ENCODE measurements at regions of chr3 and their contacts with region 1.

Region 1: GRCh38 chr3:11258958-11259357 is 13.2 kb upstream of the ATG7 start:
- H3K4me3 Mint-ChIP-seq: no peak overlapping the region
- H3K27ac Mint-ChIP-seq: no peak overlapping the region
- H3K4me1 Mint-ChIP-seq: peaks cover 22% of the 10 kb centered on the region
- H3K27me3 Mint-ChIP-seq: no peaks in the 10 kb centered on the region

Region 2: GRCh38 chr3:11172105-11172690 is 86.8 kb before region 1 on chr3:
- intact Hi-C with region 1: no loop called
- H3K4me3 Mint-ChIP-seq: no peak overlapping the region
- H3K27ac Mint-ChIP-seq: no peak overlapping the region
- H3K4me1 Mint-ChIP-seq: peaks cover 64% of the 10 kb centered on the region
- H3K27me3 Mint-ChIP-seq: peaks cover 2% of the 10 kb centered on the region

Region 3: DNA sequence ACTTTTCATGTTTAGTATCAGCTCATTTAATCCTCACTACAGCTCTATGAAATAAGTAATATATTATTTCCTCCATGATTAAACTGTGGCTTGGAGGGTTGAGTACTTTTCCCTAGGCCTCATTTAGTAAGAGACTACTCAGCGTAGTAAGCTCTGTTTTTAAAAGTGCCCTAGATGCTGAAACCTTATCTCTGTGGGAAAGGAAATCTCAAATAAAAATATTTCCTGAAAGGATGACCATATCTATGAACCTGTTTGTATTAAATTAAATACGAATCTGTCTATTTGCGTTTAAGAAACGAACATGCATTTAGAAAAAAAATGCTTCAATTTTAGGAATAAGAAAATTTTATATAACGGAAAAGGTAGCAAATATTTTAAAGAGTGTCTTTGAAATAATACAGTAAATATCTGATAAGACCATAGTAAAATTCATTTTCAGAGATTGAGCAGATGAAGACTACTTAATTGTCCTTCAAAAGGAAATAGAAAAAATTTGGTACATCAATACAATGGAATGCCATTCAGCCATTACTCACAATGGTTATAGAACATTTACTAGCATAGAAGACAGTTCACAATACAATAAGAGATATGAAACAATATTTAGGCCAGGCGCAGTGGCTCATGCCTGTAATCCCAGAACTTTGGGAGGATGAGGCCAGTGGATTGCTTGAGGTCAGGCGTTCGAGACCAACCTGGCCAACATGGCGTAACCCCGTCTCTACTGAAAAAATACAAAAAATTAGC is 69.4 kb after region 1 on chr3:
- intact Hi-C with region 1: loop called (anchors 5 kb)
- H3K4me3 Mint-ChIP-seq: no peak overlapping the region
- H3K27ac Mint-ChIP-seq: no peak overlapping the region
- H3K4me1 Mint-ChIP-seq: peaks cover 12% of the 10 kb centered on the region
- H3K27me3 Mint-ChIP-seq: no peaks in the 10 kb centered on the region

Region 4: GRCh38 chr3:11367143-11367693 is 108.3 kb after region 1 on chr3:
- intact Hi-C with region 1: no loop called
- H3K4me3 Mint-ChIP-seq: no peak overlapping the region
- H3K27ac Mint-ChIP-seq: peak overlapping the region; percentile 41
- H3K4me1 Mint-ChIP-seq: peaks cover 34% of the 10 kb centered on the region
- H3K27me3 Mint-ChIP-seq: no peaks in the 10 kb centered on the region